ENCODE measurements at regions of chr22 and their contacts with region 1.

Region 1: GRCh38 chr22:21760640-21761039 is 25.0 kb upstream of the YPEL1 start:
- DNase-seq: no peak
- ATAC-seq: no peak
- H3K4me3 Mint-ChIP-seq: no peak overlapping the region
- H3K27ac Mint-ChIP-seq: no peak overlapping the region
- H3K4me1 Mint-ChIP-seq: peaks cover 55% of the 10 kb centered on the region
- H3K27me3 Mint-ChIP-seq: no peaks in the 10 kb centered on the region
- CTCF ChIP-seq: no peak

Region 2: GRCh38 chr22:21735200-21736076 is 25.2 kb before region 1 on chr22 and contains the start of gene YPEL1:
- CTCF ChIA-PET with region 1: interaction called, 3 read pairs
- POLR2A ChIA-PET with region 1: interaction called, 10 read pairs
- intact Hi-C with region 1: no loop called
- DNase-seq: peak; percentile 93
- ATAC-seq: peak; percentile 92
- H3K4me3 Mint-ChIP-seq: peak within 1 kb of the TSS; percentile 79
- H3K27ac Mint-ChIP-seq: peak within 1 kb of the TSS; percentile 60
- H3K4me1 Mint-ChIP-seq: peaks cover 12% of the 10 kb centered on the region
- H3K27me3 Mint-ChIP-seq: no peaks in the 10 kb centered on the region
- CTCF ChIP-seq: no peak
- total RNA-seq, gene YPEL1: 0.99 to 1.2 TPM

Region 3: GRCh38 chr22:21802056-21802455 is 41.4 kb after region 1 on chr22:
- CTCF ChIA-PET with region 1: no interaction called
- POLR2A ChIA-PET with region 1: no interaction called
- intact Hi-C with region 1: no loop called
- DNase-seq: no peak
- ATAC-seq: no peak
- H3K4me3 Mint-ChIP-seq: no peak overlapping the region
- H3K27ac Mint-ChIP-seq: no peak overlapping the region
- H3K4me1 Mint-ChIP-seq: peaks cover 7% of the 10 kb centered on the region
- H3K27me3 Mint-ChIP-seq: no peaks in the 10 kb centered on the region
- CTCF ChIP-seq: no peak